AG04450 (cell line): ENCODE measurements at regions of chr4 and their contacts with region 1.

Region 1: DNA sequence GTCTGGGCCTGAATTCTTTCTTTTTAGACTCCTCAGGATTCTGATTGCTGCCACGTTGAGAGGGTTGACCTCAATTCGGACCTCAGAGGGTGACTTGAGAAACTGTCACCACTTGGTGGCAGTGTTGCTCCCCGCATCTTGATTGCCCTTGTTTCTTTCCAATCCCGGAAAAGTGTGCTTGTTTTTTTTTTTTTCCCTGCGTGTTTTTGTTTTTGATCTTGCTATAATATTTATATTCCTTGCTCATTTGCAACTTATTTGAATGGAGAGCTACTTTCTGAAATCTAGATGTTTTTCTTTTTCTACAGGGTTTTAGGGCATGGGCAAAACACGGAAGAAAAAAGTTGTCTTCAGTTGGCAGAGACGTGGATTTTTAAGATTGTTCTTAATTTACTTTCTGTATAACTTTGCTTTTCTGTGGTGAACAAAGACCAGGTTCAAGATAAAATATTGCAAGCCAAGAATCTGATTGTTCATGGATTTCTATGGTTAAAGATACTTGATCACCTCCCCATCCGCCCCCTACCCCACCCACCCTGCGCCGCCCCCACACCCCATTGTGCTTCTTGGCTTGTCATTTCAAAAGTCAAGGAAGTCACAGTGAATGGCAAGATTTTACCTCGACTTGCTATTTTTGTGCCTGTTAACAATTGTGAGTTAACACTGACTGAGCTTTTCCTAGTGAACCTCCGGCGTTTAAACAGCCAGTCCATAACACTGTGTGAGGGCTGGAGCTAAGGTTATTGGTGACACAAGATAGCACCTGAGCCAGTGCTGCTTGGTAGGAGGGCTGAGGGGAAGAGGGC is 102.1 kb downstream of the PTTG2 start:
- DNase-seq: peak; percentile 51
- H3K4me3 ChIP-seq: no peak overlapping the region; the same call in 1 of the 2 replicates
- H3K27ac ChIP-seq: no peak overlapping the region
- H3K27me3 ChIP-seq: no peaks in the 10 kb centered on the region
- CTCF ChIP-seq: peak; percentile 84

Region 2: GRCh38 chr4:37936889-37937498 is 125.3 kb before region 1 on chr4:
- CTCF ChIA-PET with region 1: no interaction called
- POLR2A ChIA-PET with region 1: no interaction called
- DNase-seq: no peak
- H3K4me3 ChIP-seq: no peak overlapping the region
- H3K27ac ChIP-seq: no peak overlapping the region
- H3K27me3 ChIP-seq: peaks cover 7% of the 10 kb centered on the region
- CTCF ChIP-seq: 0 out of 2 replicates have a peak, but pooled peaks have one; percentile 3

Region 3: GRCh38 chr4:38119668-38120385 is 57.5 kb after region 1 on chr4:
- CTCF ChIA-PET with region 1: interaction called, 11 read pairs
- POLR2A ChIA-PET with region 1: no interaction called
- DNase-seq: peak; percentile 52
- H3K4me3 ChIP-seq: no peak overlapping the region
- H3K27ac ChIP-seq: peak overlapping the region; percentile 62
- H3K27me3 ChIP-seq: no peaks in the 10 kb centered on the region
- CTCF ChIP-seq: no peak

Region 4: DNA sequence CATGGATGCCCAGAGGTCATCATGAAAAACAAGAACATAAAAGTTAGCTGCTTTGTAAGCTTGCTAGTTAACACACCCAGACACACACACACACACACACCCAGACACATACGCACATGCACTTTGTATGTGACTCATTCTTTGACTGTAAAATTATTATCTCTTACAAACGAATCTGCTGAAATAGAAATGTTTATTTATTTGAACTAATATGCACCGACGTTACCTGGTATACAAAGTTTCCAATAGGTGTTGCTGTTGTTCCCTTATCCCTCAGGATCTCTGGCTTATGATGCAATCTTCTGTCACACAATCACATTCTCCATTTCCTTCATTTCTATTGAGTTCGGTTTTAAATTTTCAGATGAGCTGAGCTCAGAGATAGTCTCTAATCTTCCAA is 107.2 kb after region 1 on chr4:
- CTCF ChIA-PET with region 1: interaction called, 15 read pairs
- POLR2A ChIA-PET with region 1: no interaction called
- DNase-seq: no peak
- H3K4me3 ChIP-seq: no peak overlapping the region
- H3K27ac ChIP-seq: no peak overlapping the region
- H3K27me3 ChIP-seq: no peaks in the 10 kb centered on the region
- CTCF ChIP-seq: no peak

Region 5: GRCh38 chr4:38174801-38175200 is 112.5 kb after region 1 on chr4:
- CTCF ChIA-PET with region 1: interaction called, 27 read pairs
- POLR2A ChIA-PET with region 1: no interaction called
- DNase-seq: no peak
- H3K4me3 ChIP-seq: no peak overlapping the region
- H3K27ac ChIP-seq: no peak overlapping the region
- H3K27me3 ChIP-seq: no peaks in the 10 kb centered on the region
- CTCF ChIP-seq: no peak

Region 6: GRCh38 chr4:38667085-38667893 is 605.0 kb after region 1 on chr4:
- CTCF ChIA-PET with region 1: interaction called, 17 read pairs
- POLR2A ChIA-PET with region 1: interaction called, 3 read pairs
- DNase-seq: peak; percentile 97
- H3K4me3 ChIP-seq: peak overlapping the region; percentile 73
- H3K27ac ChIP-seq: peak overlapping the region; percentile 99
- H3K27me3 ChIP-seq: no peaks in the 10 kb centered on the region
- CTCF ChIP-seq: no peak

Region 7: GRCh38 chr4:38730830-38731646 is 668.7 kb after region 1 on chr4:
- CTCF ChIA-PET with region 1: interaction called, 29 read pairs
- POLR2A ChIA-PET with region 1: no interaction called
- DNase-seq: peak; percentile 88
- H3K4me3 ChIP-seq: no peak overlapping the region
- H3K27ac ChIP-seq: no peak overlapping the region
- H3K27me3 ChIP-seq: peaks cover 8% of the 10 kb centered on the region
- CTCF ChIP-seq: peak; percentile 95

Region 8: DNA sequence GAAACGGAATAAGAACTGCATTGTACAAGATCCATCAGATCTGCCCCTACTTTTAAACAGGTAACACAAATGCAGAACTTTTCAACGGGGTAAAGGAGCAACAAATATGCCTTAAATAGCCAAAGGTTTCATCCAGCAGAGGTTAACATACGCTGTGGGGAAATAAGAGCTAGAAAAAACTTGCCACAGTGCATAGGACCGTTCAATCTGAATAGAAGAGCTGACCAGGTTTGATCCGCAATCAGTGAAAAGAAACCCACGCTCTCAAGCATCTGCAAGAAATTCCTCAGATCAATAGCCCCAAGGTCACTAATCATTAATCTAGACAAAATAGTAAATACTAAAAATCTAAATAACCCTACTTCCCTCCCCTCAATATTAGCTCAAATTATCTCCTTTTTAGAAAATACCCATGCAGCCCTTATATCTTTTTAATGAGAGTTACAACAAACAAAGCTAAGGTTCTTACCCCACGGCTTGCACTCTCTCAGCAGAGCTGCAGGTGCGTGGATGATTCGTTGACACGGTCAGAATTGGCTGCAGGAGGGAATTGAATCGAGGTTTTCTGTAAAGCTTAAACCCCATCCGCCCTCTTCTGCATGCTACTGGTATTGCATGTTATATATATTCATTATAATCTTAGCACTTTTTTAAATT is 720.3 kb after region 1 on chr4 and contains the start of gene TLR10:
- CTCF ChIA-PET with region 1: interaction called, 11 read pairs
- POLR2A ChIA-PET with region 1: no interaction called
- DNase-seq: peak; percentile 16
- H3K4me3 ChIP-seq: no peak within 1 kb of the TSS
- H3K27ac ChIP-seq: no peak within 1 kb of the TSS
- H3K27me3 ChIP-seq: peaks cover 4% of the 10 kb centered on the region
- CTCF ChIP-seq: peak; percentile 64
- polyA plus RNA-seq, gene TLR10: not detected in 2 replicates